A549 (cell line): ENCODE measurements at regions of chr11 and their contacts with region 1.

Region 1: GRCh38 chr11:44936525-44936924 is 14.2 kb downstream of the TP53I11 start:
- DNase-seq: peak; percentile 68 to 80
- ATAC-seq: peak; percentile 88 to 93
- H3K4me3 ChIP-seq: no peak overlapping the region
- H3K27ac ChIP-seq: no peak overlapping the region
- H3K4me1 ChIP-seq: 0 out of 3 replicates have a peak, but pooled peaks cover 3% of the 10 kb centered on the region
- CTCF ChIP-seq: peak; percentile 88
- EP300 ChIP-seq: no peak
- POLR2A ChIP-seq: no peak
- RAD21 ChIP-seq: peak; percentile 97

Region 2: GRCh38 chr11:44916801-44917385 is 19.6 kb before region 1 on chr11:
- CTCF ChIA-PET with region 1: interaction called, 62 read pairs
- POLR2A ChIA-PET with region 1: no interaction called
- DNase-seq: no peak
- ATAC-seq: no peak; a peak in 2 of 6 replicates
- H3K4me3 ChIP-seq: no peak overlapping the region
- H3K27ac ChIP-seq: no peak overlapping the region
- H3K4me1 ChIP-seq: no peaks in the 10 kb centered on the region
- CTCF ChIP-seq: no peak
- EP300 ChIP-seq: no peak
- POLR2A ChIP-seq: no peak
- RAD21 ChIP-seq: no peak

Region 3: DNA sequence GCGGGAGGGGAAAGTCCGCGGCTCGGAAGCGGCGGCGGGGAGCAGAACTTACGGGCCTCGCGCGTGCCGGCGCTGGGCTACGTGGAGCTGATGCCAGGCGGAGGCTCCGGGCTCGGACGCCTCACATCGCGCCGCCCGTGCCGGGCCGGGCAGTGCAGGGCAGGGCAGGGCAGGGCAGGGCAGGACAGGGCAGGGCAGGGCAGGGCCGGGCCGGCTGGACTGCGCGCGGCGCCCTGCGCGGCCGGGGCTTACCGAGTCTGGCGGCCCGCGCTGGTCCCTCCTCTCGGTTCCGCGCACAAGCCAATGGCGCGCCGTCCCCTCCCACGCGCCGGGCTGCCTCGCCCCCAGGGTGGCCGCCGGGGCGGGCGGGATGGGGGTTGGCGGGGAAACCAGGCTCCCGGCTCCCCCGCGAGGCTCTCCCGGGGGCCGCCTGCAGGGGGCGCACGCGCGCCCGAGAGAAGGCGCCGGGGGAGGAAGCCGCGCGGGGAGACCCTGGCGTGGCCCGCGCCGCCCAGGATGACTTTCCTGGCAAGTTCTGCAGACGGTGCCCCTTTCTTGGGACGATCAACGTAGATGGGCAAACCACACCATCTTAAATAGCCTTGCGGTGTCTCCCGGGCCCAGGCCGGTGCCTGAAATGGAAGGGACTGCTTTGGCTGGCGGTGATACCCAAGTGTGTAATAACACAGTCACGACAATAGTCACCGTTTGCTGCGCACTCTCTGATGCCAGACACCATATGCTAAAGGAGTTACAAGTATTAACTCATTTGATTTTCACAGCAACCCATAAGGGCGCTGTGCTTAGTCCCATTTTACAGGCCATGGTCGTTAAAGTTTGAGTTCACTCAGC is 14.3 kb after region 1 on chr11 and contains the start of gene TP53I11:
- CTCF ChIA-PET with region 1: interaction called, 332 read pairs
- POLR2A ChIA-PET with region 1: no interaction called
- DNase-seq: peak; percentile 53 to 78
- ATAC-seq: peak; percentile 57 to 86
- H3K4me3 ChIP-seq: peak within 1 kb of the TSS; percentile 99
- H3K27ac ChIP-seq: peak within 1 kb of the TSS; percentile 92 to 95
- H3K4me1 ChIP-seq: peaks cover 30% of the 10 kb centered on the region
- CTCF ChIP-seq: peak; percentile 89
- EP300 ChIP-seq: no peak
- POLR2A ChIP-seq: peak; percentile 64
- RAD21 ChIP-seq: peak in 1 of 2 experiments; percentile 51; a peak in 1 of 5 replicates
- polyA plus RNA-seq, gene TP53I11: 11.2 and 20.7 TPM in 2 replicates

Region 4: DNA sequence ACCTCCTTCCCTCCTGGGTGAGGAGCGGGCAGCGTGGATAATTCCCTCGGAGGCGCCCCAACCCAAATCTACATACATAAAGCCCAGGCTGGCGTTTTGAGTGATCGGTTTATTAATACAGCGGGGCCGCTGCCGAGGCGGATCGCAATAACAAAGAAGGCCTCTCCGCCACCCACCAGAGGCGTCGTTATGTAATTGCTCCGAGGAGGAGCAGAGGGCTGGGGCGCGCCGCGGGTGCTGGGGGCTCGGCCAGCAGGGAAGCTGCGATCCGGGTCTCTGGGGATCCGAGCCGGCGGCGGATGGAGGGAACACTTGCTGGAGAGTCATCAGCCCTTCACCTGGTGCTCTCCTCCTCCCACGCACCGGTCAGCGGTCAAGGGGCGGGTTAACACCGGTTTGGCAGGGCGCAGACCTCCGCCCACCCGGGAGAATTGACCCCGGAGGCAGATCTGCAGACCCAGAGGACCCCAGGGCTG is 20.6 kb after region 1 on chr11:
- CTCF ChIA-PET with region 1: interaction called, 32 read pairs
- POLR2A ChIA-PET with region 1: no interaction called
- DNase-seq: no peak
- ATAC-seq: no peak
- H3K4me3 ChIP-seq: no peak overlapping the region
- H3K27ac ChIP-seq: no peak overlapping the region
- H3K4me1 ChIP-seq: peaks cover 29% of the 10 kb centered on the region
- CTCF ChIP-seq: no peak
- EP300 ChIP-seq: no peak
- POLR2A ChIP-seq: no peak
- RAD21 ChIP-seq: no peak

Region 5: GRCh38 chr11:44977476-44977984 is 41.0 kb after region 1 on chr11:
- CTCF ChIA-PET with region 1: interaction called, 29 read pairs
- POLR2A ChIA-PET with region 1: no interaction called
- DNase-seq: peak; percentile 34 to 36
- ATAC-seq: peak in 1 of 2 experiments; percentile 45; a peak in 3 of 6 replicates
- H3K4me3 ChIP-seq: no peak overlapping the region
- H3K27ac ChIP-seq: peak overlapping the region; percentile 18 to 81; a peak in 3 of 6 replicates
- H3K4me1 ChIP-seq: peaks cover 42% of the 10 kb centered on the region
- CTCF ChIP-seq: peak; percentile 29; the same call in 2 of the 3 replicates
- EP300 ChIP-seq: no peak
- POLR2A ChIP-seq: no peak
- RAD21 ChIP-seq: peak in 1 of 2 experiments; percentile 41; a peak in 2 of 5 replicates

Region 6: DNA sequence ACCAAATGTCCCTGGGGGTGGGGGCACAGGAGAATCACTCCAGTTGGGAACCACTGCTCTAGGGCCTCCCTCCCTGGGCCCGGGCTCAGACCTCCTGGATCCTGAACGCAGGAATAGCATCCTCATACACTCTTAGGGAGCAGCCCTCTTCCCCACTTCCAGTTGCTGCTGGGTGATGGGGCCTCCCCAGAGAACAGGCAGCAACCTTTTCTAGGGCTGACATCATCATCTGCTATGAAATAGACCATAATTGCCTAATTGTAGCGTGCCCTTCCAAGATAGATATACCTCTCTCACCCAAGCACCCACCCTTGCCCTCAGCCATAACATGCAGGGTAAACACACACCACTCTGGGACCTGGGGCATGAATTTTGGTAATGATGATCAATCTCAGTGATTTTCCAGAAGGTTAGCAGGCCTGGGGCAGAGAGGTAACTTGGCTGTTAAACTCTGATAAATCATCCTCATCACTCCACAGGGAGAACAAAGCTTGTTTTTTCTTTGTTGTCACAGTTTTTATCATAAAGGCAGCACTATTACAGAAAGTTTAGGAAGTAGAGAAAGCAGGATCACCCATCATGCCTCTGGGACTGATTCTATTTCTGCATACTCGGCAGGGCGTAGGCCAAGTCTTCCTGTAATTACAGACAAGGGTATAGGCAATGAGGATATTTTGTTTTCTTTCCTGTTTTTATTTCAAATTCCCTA is 121.6 kb after region 1 on chr11:
- CTCF ChIA-PET with region 1: interaction called, 17 read pairs
- POLR2A ChIA-PET with region 1: no interaction called
- DNase-seq: no peak
- ATAC-seq: no peak
- H3K4me3 ChIP-seq: no peak overlapping the region
- H3K27ac ChIP-seq: no peak overlapping the region
- H3K4me1 ChIP-seq: 0 out of 3 replicates have a peak, but pooled peaks cover 4% of the 10 kb centered on the region
- CTCF ChIP-seq: no peak
- EP300 ChIP-seq: no peak
- POLR2A ChIP-seq: no peak
- RAD21 ChIP-seq: no peak

Region 7: GRCh38 chr11:45133871-45134270 is 197.3 kb after region 1 on chr11:
- CTCF ChIA-PET with region 1: interaction called, 22 read pairs
- POLR2A ChIA-PET with region 1: no interaction called
- DNase-seq: no peak
- ATAC-seq: no peak
- H3K4me3 ChIP-seq: no peak overlapping the region
- H3K27ac ChIP-seq: no peak overlapping the region
- H3K4me1 ChIP-seq: peaks cover 7% of the 10 kb centered on the region; the same call in 1 of the 3 replicates
- CTCF ChIP-seq: no peak
- EP300 ChIP-seq: no peak
- POLR2A ChIP-seq: no peak
- RAD21 ChIP-seq: no peak